ENCODE measurements at regions of chr6 and their contacts with region 1.

Region 1: DNA sequence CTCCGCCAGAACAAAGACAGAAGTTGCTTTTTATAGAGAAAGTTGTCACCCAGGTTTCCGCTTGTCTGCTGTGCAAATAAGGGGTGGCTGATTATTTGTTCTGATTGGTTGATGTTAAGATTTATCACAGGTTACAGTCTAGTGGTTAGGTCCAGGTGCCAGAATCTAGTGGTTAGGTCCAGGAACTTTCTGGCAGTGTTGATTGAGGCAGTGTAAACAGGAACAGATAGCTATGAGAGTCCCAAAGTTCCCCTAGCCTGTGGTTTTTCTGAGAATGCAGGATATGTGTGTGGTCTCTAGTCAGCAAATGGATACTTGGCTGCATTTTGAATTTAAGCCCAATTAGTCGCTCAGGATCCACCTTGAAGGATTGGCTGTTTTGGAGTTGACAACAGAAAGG is 148.0 kb downstream of the TMEM200A start:
- DNase-seq: peak; percentile 77
- H3K4me3 Mint-ChIP-seq: no peak overlapping the region
- H3K27ac Mint-ChIP-seq: peak overlapping the region; percentile 78
- H3K4me1 Mint-ChIP-seq: peaks cover 66% of the 10 kb centered on the region
- H3K27me3 Mint-ChIP-seq: no peaks in the 10 kb centered on the region

Region 2: DNA sequence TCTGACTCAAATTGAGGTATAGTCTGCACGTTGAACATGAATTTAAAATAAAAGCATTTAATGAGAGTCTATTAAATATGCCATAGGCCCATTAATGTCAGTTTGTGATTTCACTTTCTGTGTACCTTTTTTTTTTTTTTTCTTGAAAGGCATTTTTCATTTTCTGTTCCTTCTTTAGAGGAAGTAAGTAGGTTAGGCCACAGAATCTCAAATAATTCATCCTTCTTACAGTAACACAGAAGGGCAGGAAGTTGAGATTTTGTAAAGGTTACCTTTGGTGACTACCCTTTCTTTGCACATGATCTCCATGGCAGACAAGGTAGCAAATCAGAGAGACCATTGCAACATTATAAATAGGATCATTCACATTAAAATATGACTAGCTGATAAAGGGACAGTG is 485.8 kb before region 1 on chr6:
- CTCF ChIA-PET with region 1: no interaction called
- intact Hi-C with region 1: loop called (anchors 1 kb)
- DNase-seq: no peak
- H3K4me3 Mint-ChIP-seq: no peak overlapping the region
- H3K27ac Mint-ChIP-seq: peak overlapping the region; percentile 14
- H3K4me1 Mint-ChIP-seq: peaks cover 49% of the 10 kb centered on the region
- H3K27me3 Mint-ChIP-seq: no peaks in the 10 kb centered on the region

Region 3: DNA sequence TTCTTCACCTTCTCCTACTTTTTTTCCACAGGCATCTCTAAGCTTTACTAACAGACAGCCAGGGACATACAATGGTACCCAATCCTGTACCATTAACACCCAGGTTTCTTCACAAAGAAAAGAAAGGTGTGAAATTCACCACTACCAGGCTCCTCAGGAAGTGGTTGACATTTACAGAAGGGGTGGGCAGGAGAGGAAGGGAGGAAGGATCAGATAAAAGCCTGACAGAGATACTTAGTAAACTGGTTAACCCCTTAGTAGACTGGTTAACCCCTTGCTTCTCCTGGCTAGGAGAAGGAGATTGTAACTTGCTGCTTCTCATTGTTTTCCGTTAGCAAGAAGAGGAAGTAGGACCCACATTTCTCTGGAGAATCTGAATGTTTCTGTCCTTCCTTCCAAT is 298.2 kb before region 1 on chr6:
- CTCF ChIA-PET with region 1: no interaction called
- intact Hi-C with region 1: loop called (anchors 10 kb)
- DNase-seq: peak; percentile 49
- H3K4me3 Mint-ChIP-seq: peak overlapping the region; percentile 60
- H3K27ac Mint-ChIP-seq: peak overlapping the region; percentile 37
- H3K4me1 Mint-ChIP-seq: peaks cover 50% of the 10 kb centered on the region
- H3K27me3 Mint-ChIP-seq: no peaks in the 10 kb centered on the region

Region 4: GRCh38 chr6:130434174-130434873 is 79.4 kb before region 1 on chr6:
- CTCF ChIA-PET with region 1: no interaction called
- intact Hi-C with region 1: no loop called
- DNase-seq: no peak
- H3K4me3 Mint-ChIP-seq: no peak overlapping the region
- H3K27ac Mint-ChIP-seq: no peak overlapping the region
- H3K4me1 Mint-ChIP-seq: no peaks in the 10 kb centered on the region
- H3K27me3 Mint-ChIP-seq: no peaks in the 10 kb centered on the region

Region 5: GRCh38 chr6:130473886-130474285 is 39.9 kb before region 1 on chr6:
- CTCF ChIA-PET with region 1: no interaction called
- intact Hi-C with region 1: no loop called
- DNase-seq: no peak
- H3K4me3 Mint-ChIP-seq: no peak overlapping the region
- H3K27ac Mint-ChIP-seq: no peak overlapping the region
- H3K4me1 Mint-ChIP-seq: no peaks in the 10 kb centered on the region
- H3K27me3 Mint-ChIP-seq: no peaks in the 10 kb centered on the region

Region 6: GRCh38 chr6:130602151-130602770 is 88.5 kb after region 1 on chr6:
- CTCF ChIA-PET with region 1: no interaction called
- intact Hi-C with region 1: loop called (anchors 1 kb)
- DNase-seq: peak; percentile 50
- H3K4me3 Mint-ChIP-seq: no peak overlapping the region
- H3K27ac Mint-ChIP-seq: peak overlapping the region; percentile 28
- H3K4me1 Mint-ChIP-seq: peaks cover 21% of the 10 kb centered on the region
- H3K27me3 Mint-ChIP-seq: no peaks in the 10 kb centered on the region

Region 7: GRCh38 chr6:130676077-130676772 is 162.5 kb after region 1 on chr6:
- CTCF ChIA-PET with region 1: no interaction called
- intact Hi-C with region 1: loop called (anchors 5 kb)
- DNase-seq: no peak
- H3K4me3 Mint-ChIP-seq: no peak overlapping the region
- H3K27ac Mint-ChIP-seq: no peak overlapping the region
- H3K4me1 Mint-ChIP-seq: peaks cover 15% of the 10 kb centered on the region
- H3K27me3 Mint-ChIP-seq: no peaks in the 10 kb centered on the region

Region 8: DNA sequence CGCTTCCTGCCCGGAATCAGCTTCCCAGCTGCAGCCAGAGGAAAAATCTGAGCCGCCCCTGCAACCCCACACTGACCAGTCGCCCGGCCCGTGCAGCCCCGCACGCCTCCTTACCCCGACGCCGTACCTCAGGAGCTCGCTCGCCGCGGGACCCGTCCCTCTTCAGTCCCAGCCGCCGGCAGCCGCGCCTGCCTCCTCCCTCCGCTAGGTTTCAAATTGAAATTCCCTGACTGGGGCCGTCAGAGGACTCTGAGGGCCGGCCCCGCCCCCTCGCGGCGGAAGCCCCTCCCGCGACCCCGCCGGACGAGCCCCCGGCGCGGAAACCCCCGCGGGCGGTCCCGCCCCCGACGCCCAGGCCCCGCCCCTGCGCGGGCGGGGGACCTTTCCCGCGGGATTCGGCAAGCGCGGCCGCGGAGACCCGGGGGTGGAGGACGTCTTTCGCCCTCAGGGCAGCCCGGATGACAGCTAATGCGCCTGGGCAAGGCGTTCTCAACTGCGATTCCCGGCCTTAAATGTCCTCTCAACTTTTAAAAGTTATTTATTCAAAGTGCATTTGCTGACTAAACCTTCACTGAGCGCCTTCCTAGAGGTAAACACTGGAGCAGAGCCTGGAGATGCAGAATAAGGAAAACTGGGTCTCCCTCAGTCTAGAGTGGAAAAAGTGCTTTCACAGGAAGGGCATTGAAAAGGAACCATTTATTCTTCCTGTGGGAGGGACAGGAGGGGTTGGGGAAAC is 549.4 kb after region 1 on chr6 and contains the start of gene EPB41L2:
- CTCF ChIA-PET with region 1: no interaction called
- intact Hi-C with region 1: loop called (anchors 5 kb)
- DNase-seq: peak; percentile 80
- H3K4me3 Mint-ChIP-seq: peak within 1 kb of the TSS; percentile 80
- H3K27ac Mint-ChIP-seq: no peak within 1 kb of the TSS
- H3K4me1 Mint-ChIP-seq: peaks cover 22% of the 10 kb centered on the region
- H3K27me3 Mint-ChIP-seq: peaks cover 2% of the 10 kb centered on the region
- total RNA-seq, gene EPB41L2: 33.5 to 37.7 TPM

Region 9: DNA sequence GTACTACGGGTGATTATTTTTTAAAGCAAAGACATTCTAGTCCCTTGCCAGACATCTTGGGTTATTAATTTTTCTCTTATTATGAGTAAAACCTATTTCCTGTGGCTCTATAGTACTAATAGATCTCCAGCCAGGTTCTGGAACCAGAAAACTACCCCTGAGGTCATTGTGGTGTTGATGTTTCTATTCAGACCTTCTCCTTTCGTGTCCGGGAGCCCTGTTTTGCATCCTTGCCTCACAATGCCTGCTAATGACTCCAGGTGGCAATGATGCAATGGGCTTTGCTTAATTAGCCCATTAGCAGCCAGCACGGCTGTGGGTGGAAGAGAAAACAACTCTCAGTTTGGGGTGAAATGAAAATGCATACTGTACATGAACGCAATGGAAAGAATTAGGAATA is 996.3 kb after region 1 on chr6:
- CTCF ChIA-PET with region 1: no interaction called
- intact Hi-C with region 1: no loop called
- DNase-seq: no peak
- H3K4me3 Mint-ChIP-seq: no peak overlapping the region
- H3K27ac Mint-ChIP-seq: no peak overlapping the region
- H3K4me1 Mint-ChIP-seq: no peaks in the 10 kb centered on the region
- H3K27me3 Mint-ChIP-seq: no peaks in the 10 kb centered on the region